ENCODE measurements at regions of chr14 and their contacts with region 1.

Region 1: GRCh38 chr14:50109342-50109741 is 7.0 kb downstream of the VCPKMT start:
- DNase-seq: no peak
- ATAC-seq: no peak
- H3K4me3 ChIP-seq: no peak overlapping the region
- H3K4me3 Mint-ChIP-seq: no peak overlapping the region
- H3K27ac ChIP-seq: peak overlapping the region in 1 of 2 donors; percentile 85
- H3K27ac Mint-ChIP-seq: no peak overlapping the region
- H3K4me1 ChIP-seq: peaks cover 28 to 34% of the 10 kb centered on the region in 2 donors
- H3K4me1 Mint-ChIP-seq: peaks cover 40% of the 10 kb centered on the region
- H3K27me3 ChIP-seq: no peaks in the 10 kb centered on the region
- H3K27me3 Mint-ChIP-seq: no peaks in the 10 kb centered on the region
- CTCF ChIP-seq: no peak

Region 2: DNA sequence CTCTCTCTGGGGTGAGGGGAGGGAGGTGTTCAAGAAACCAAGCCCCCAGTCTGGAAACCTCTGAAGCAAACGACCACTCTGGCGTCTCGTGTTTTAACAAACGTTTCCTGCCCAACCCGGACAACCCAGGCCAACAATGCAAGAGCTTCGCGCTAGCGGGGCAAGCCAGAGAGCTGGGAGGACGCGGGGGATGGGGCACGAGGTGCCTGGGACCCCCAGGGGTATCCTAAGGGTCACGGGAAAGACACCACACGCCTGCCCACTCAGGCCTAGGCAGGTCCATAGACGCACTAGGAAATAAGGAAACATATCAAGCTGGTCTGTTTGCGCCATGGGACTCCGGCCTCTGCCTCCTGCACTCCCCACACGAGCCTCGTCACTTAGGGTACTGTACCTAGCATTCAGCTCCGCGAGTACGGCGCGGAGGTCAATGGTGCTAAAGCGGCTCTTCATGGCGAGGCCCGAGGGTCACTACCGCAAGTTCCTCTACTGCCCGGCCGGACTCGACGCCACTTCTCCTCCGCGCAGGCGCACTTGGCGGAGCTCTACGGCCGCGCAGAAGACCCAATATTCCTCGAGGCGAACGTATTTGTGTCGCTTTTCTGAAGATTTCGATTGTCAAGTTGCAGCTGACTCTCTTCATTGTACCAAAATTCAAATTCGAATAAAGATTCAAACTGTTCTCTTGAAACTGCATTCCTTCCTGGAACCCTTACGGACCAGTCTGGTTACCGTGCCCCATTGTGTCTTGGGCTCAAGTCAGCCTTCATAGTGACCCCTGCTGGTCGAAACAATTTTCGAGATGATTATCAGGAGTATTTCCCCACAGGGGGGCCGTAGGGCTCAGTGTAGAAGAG is 256.8 kb before region 1 on chr14 and contains the start of gene NEMF:
- CTCF ChIA-PET with region 1: interaction called, 52 read pairs
- POLR2A ChIA-PET with region 1: interaction called, 4 read pairs
- intact Hi-C with region 1: loop called (anchors 1 kb)
- DNase-seq: peak; percentile 94
- ATAC-seq: peak; percentile 84
- H3K4me3 ChIP-seq: peak within 1 kb of the TSS; percentile 78 to 99 (median 99)
- H3K4me3 Mint-ChIP-seq: peak within 1 kb of the TSS; percentile 98
- H3K27ac ChIP-seq: peak within 1 kb of the TSS; percentile 72 to 88
- H3K27ac Mint-ChIP-seq: peak within 1 kb of the TSS; percentile 98
- H3K4me1 ChIP-seq: peaks cover 20 to 31% of the 10 kb centered on the region in 2 donors
- H3K4me1 Mint-ChIP-seq: peaks cover 44% of the 10 kb centered on the region
- H3K27me3 ChIP-seq: no peaks in the 10 kb centered on the region
- H3K27me3 Mint-ChIP-seq: no peaks in the 10 kb centered on the region
- CTCF ChIP-seq: peak; percentile 86
- total RNA-seq, gene NEMF: 127 and 146 TPM in 2 replicates

Region 3: GRCh38 chr14:49977126-49977841 is 132.1 kb before region 1 on chr14:
- CTCF ChIA-PET with region 1: interaction called, 14 read pairs
- POLR2A ChIA-PET with region 1: interaction called, 6 read pairs
- intact Hi-C with region 1: no loop called
- DNase-seq: peak; percentile 80
- ATAC-seq: peak; percentile 85
- H3K4me3 ChIP-seq: peak overlapping the region; percentile 26 to 69 (median 48)
- H3K4me3 Mint-ChIP-seq: peak overlapping the region; percentile 83
- H3K27ac ChIP-seq: peak overlapping the region; percentile 84 to 87
- H3K27ac Mint-ChIP-seq: peak overlapping the region; percentile 90
- H3K4me1 ChIP-seq: peaks cover 85 to 88% of the 10 kb centered on the region in 2 donors
- H3K4me1 Mint-ChIP-seq: peaks cover 80% of the 10 kb centered on the region
- H3K27me3 ChIP-seq: no peaks in the 10 kb centered on the region
- H3K27me3 Mint-ChIP-seq: no peaks in the 10 kb centered on the region
- CTCF ChIP-seq: no peak

Region 4: GRCh38 chr14:50055461-50056228 is 53.7 kb before region 1 on chr14:
- CTCF ChIA-PET with region 1: interaction called, 29 read pairs
- POLR2A ChIA-PET with region 1: interaction called, 4 read pairs
- intact Hi-C with region 1: loop called (anchors 1 kb)
- DNase-seq: peak; percentile 64
- ATAC-seq: peak; percentile 93
- H3K4me3 ChIP-seq: no peak overlapping the region
- H3K4me3 Mint-ChIP-seq: peak overlapping the region; percentile 7
- H3K27ac ChIP-seq: no peak overlapping the region
- H3K27ac Mint-ChIP-seq: peak overlapping the region; percentile 77
- H3K4me1 ChIP-seq: peaks cover 15 to 35% of the 10 kb centered on the region in 2 donors
- H3K4me1 Mint-ChIP-seq: peaks cover 44% of the 10 kb centered on the region
- H3K27me3 ChIP-seq: no peaks in the 10 kb centered on the region
- H3K27me3 Mint-ChIP-seq: no peaks in the 10 kb centered on the region
- CTCF ChIP-seq: peak; percentile 52